Vagina (tissue), 2 donors: ENCODE measurements at regions of chr3 and their contacts with region 1.

Region 1: DNA sequence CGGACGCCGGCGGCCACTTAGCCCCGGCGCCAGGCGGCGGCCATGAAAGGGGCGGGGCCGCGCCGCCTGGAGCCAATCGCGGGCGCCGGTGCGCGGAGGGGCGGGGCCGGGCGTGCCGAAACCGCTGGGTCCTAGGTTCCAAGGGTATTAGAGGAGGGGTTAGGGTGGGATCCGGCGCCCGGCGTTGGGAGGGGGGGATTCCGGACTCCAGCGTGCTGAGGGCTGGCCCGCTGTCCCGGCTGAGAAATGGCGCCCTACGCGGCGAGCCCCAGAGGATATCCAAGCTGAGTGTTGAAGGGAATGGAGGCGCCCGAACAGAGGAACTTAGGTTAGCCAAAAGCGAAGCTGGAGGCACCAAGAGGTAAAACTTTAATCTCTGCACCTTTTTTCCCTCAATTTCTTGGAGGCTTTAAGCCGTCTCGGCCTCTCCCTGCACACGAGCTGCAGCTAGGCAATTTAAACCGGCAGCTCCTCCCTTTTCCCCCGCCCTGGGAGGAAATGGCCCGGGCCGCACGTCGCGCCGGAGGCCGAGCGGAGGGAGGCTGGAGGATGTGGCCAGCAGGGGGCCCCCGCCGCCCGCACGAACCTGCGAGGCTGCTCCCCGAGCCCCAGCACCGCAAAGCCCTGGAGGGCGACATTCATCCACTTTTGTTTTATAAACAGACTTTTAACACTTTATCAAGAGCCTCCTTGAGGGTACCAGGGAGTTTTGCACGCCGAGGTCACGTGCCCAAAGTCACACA is at the start of gene XXYLT1:
- DNase-seq: no peak
- H3K4me3 ChIP-seq: peak within 1 kb of the TSS; percentile 71 to 76
- H3K27ac ChIP-seq: peak within 1 kb of the TSS; percentile 85
- H3K4me1 ChIP-seq: peaks cover 28% of the 10 kb centered on the region
- H3K27me3 ChIP-seq: no peaks in the 10 kb centered on the region
- CTCF ChIP-seq: peak; percentile 91 to 97 (median 96)
- POLR2A ChIP-seq: no peak
- total RNA-seq, gene XXYLT1: 14.5 TPM

Region 2: DNA sequence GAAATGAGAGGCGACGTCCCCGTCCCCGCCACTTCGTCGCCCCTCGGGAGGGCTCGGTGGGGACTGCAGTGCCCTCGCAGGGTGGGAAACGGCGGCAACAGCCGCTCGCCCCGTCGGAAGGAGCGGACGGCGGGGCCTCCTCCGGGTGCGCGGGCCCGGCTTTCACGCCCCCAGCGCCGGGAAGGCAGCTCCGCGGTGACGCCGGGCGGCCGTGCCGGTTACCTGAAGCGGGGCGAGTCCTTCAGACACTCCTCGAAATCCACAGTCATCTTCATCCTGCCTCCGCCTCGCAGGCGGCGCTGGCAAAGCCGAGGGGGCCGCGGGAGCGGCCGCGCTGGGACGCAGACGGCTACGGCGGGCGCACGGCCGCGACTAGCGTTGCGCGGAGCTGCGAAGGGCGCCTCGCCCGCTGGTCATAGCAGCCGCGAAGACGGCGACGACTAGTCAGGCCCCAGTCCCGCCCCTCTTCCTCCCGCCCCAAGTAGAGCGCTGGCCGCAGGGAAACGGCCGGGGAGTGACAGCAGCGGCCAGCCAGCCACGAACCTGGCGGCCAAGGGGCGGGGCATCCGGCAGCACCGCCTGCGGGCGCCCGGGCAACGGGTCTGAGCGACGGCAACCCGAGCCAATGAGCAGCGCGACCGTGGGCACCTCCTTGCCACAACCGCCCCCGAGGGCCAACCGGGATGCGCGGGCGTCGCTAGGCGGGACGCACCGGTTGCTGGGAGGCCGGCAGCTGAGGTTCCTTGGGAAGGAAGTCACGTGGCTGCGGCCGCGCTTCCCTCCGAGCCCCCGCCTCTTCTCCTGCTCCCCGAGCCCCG is 171.5 kb after region 1 on chr3 and contains the start of gene ACAP2:
- intact Hi-C with region 1: loop called (anchors 10 kb)
- DNase-seq: peak; percentile 100
- H3K4me3 ChIP-seq: peak within 1 kb of the TSS; percentile 87 to 89
- H3K27ac ChIP-seq: peak within 1 kb of the TSS; percentile 99
- H3K4me1 ChIP-seq: peaks cover 40% of the 10 kb centered on the region
- H3K27me3 ChIP-seq: no peaks in the 10 kb centered on the region
- CTCF ChIP-seq: no peak
- POLR2A ChIP-seq: peak in 1 of 2 donors; percentile 93
- total RNA-seq, gene ACAP2: 59.4 TPM